Endothelial cell of umbilical vein (primary cell): ENCODE measurements at regions of chr14 and their contacts with region 1.

Region 1: DNA sequence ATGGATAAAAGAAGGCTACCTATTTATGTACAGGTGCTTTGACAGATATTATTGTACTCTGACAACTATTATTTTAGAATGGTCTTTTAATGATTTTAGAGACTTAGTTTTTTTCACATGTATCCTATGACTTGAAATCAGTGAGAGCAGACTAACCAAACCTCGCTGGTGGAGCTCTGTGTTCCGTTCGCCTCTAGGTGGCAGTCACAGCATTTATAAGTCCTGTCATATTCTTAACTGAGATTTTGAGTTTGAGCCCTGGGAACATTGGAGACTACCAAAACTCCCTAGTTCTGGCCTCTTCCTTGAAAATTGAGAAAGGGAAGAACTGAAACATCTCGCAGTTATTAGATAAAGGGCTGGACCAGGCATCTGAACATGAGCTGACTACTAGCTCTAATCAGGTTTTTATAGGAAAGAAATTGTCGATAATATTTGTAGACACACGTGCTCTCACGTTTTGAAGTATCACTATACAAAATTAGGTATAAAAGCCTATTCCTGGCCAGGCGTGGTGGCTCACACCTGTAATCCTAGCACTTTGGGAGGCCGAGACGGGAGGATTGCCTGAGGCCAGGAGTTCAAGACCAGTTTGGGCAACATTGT is 48.3 kb downstream of the TTLL5 start:
- DNase-seq: peak; percentile 79
- H3K4me3 ChIP-seq: no peak overlapping the region
- H3K27ac ChIP-seq: no peak overlapping the region
- H3K4me1 ChIP-seq: no peaks in the 10 kb centered on the region
- H3K27me3 ChIP-seq: no peaks in the 10 kb centered on the region
- CTCF ChIP-seq: peak; percentile 72 to 75
- POLR2A ChIP-seq: no peak

Region 2: DNA sequence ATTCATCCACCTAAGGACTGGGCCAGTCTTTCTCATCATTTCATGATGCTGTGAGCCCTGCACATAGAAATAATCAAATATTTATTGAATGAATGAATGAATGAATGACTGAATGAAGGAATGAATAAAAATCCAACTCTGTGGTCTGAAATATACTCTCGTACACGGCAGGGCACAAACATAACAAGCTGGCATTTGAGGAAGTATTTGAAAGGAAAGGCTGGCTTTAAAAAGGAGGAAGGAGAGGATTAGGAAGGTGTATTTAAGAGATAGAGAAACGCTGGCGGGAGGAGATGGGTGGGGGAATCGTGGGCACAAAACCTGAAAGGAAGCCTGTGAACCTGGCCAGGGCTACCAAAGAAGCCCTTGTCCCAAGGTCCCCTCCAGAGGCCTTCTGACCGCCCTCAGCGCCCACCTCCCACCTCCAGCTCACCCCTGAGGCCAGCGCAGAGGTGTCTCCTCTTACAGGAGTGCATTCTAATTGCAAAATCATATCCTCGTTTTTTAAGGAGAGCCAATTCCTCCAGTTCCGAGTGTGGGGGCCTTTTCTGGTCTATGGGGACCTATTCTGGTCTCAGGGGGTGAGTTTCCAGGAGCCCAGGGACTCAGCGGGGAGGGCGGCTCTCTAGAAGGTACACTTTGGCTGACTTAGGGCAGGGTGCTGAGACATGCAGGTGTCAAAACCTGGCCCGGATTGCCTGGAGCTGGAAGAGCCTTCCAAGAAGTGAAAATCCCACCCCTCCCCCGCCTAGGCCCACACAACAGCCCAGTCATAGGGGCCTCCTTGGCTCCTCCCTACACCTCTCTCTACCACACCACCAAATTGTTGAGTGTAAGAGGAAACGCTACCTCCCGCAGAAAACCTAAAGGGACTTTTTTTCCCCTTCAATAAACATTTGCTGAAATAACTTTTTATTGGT is 290.2 kb before region 1 on chr14:
- CTCF ChIA-PET with region 1: no interaction called
- POLR2A ChIA-PET with region 1: no interaction called
- dilution Hi-C with region 1: no loop called
- intact Hi-C with region 1: no loop called
- DNase-seq: no peak
- H3K4me3 ChIP-seq: no peak overlapping the region
- H3K27ac ChIP-seq: no peak overlapping the region
- H3K4me1 ChIP-seq: no peaks in the 10 kb centered on the region
- H3K27me3 ChIP-seq: peaks cover 6 to 8% of the 10 kb centered on the region in 2 experiments
- CTCF ChIP-seq: no peak
- POLR2A ChIP-seq: no peak

Region 3: DNA sequence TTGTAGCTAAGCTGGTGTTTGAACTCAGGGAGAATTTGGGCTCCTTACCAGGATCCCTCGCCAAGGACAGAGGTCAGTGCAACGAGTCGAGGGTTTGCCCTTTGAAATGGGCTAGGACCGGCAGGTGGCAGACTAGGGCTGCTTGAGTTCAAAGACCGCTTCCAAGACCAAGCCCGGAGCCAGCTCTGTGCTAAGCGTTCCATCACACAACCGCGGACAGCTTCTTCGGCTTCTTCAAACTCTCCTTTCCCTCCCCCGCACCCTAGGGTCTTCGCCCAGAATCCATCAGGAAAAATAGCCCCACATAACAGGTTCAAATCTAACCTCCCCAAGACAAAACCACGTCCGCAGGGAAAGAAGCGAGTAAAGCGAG is 131.6 kb before region 1 on chr14:
- CTCF ChIA-PET with region 1: interaction called, 32 read pairs
- POLR2A ChIA-PET with region 1: no interaction called
- dilution Hi-C with region 1: no loop called
- intact Hi-C with region 1: no loop called
- DNase-seq: peak; percentile 82
- H3K4me3 ChIP-seq: peak overlapping the region; percentile 50 to 83 (median 64)
- H3K27ac ChIP-seq: no peak overlapping the region
- H3K4me1 ChIP-seq: peaks cover 18% of the 10 kb centered on the region
- H3K27me3 ChIP-seq: peaks cover 0 to 4% of the 10 kb centered on the region in 2 experiments
- CTCF ChIP-seq: peak; percentile 70 to 83
- POLR2A ChIP-seq: no peak

Region 4: DNA sequence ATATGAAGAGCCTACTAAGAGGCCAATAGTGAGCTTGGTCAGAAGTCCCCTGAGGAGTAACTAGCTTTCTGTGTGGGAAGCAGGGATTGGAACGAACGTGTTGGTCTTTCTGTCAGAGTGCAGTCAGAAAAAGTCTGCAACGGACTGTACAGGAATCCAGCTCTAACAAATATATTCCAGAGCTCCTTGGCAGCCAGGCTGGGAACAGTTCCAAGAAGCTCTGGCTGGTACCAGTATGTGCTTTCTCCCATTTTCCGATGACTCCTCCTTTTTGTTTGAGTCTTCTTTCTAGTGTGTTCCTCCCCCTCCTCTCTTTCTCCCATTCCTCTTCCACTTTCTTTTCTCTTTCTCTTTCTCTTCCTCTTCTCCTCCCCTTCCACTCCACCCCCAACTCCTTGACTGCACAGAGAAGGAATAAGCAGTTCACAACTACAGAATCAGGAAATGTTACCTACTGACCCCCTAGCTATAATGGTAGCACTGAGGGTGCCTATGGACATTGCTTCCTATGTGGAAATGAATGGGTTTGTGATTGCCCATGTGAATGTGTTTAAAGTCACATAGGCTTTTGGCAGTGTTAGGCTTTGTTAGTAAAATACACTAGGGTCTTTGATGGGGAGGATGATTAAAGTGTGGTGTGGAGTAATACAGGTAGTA is 11.7 kb after region 1 on chr14:
- CTCF ChIA-PET with region 1: interaction called, 41 read pairs
- POLR2A ChIA-PET with region 1: no interaction called
- dilution Hi-C with region 1: no loop called
- intact Hi-C with region 1: no loop called
- DNase-seq: peak; percentile 59
- H3K4me3 ChIP-seq: no peak overlapping the region
- H3K27ac ChIP-seq: no peak overlapping the region
- H3K4me1 ChIP-seq: no peaks in the 10 kb centered on the region
- H3K27me3 ChIP-seq: no peaks in the 10 kb centered on the region
- CTCF ChIP-seq: no peak
- POLR2A ChIP-seq: no peak

Region 5: GRCh38 chr14:75794615-75795038 is 85.3 kb after region 1 on chr14:
- CTCF ChIA-PET with region 1: interaction called, 57 read pairs
- POLR2A ChIA-PET with region 1: no interaction called
- dilution Hi-C with region 1: no loop called
- intact Hi-C with region 1: loop called (anchors 5 kb)
- DNase-seq: peak; percentile 49
- H3K4me3 ChIP-seq: no peak overlapping the region
- H3K27ac ChIP-seq: no peak overlapping the region
- H3K4me1 ChIP-seq: no peaks in the 10 kb centered on the region
- H3K27me3 ChIP-seq: no peaks in the 10 kb centered on the region
- CTCF ChIP-seq: peak in 1 of 2 donors; percentile 31
- POLR2A ChIP-seq: no peak

Region 6: DNA sequence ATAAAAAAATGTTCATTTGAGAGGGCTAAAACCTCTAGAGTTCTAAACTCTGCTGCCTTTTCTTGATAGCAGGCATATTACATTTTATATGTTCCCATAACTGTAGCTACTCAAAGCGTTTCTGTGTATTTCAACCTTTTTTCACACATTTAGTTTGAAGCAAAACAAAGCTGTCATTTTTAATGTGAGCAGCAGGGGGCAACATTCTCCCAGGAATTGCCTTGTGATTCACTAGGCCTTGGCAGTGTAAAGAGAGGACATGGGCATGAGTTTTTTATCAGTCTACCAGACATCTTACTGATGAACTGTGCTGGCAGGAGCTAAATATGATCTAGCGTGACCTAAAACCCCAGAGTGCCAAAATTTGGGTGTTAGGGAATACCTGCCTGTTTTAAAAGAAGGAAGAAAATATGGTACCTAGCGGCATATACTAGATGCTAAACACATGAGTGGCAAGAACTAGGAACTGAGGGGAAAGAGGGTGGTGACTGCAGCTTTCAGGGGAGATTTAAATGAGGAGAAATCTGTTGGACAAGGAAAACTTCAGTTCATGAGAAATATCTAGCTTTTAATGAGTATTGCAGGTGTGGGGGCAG is 341.6 kb after region 1 on chr14:
- CTCF ChIA-PET with region 1: interaction called, 32 read pairs
- POLR2A ChIA-PET with region 1: interaction called, 5 read pairs
- dilution Hi-C with region 1: no loop called
- intact Hi-C with region 1: loop called (anchors 5 kb)
- DNase-seq: peak; percentile 72
- H3K4me3 ChIP-seq: no peak overlapping the region
- H3K27ac ChIP-seq: no peak overlapping the region
- H3K4me1 ChIP-seq: no peaks in the 10 kb centered on the region
- H3K27me3 ChIP-seq: no peaks in the 10 kb centered on the region
- CTCF ChIP-seq: peak; percentile 51 to 69
- POLR2A ChIP-seq: no peak

Region 7: GRCh38 chr14:76386915-76387782 is 677.8 kb after region 1 on chr14:
- CTCF ChIA-PET with region 1: interaction called, 44 read pairs
- POLR2A ChIA-PET with region 1: no interaction called
- dilution Hi-C with region 1: no loop called
- intact Hi-C with region 1: loop called (anchors 1 kb)
- DNase-seq: peak; percentile 63
- H3K4me3 ChIP-seq: no peak overlapping the region
- H3K27ac ChIP-seq: no peak overlapping the region
- H3K4me1 ChIP-seq: no peaks in the 10 kb centered on the region
- H3K27me3 ChIP-seq: peaks cover 21 to 39% of the 10 kb centered on the region in 2 experiments
- CTCF ChIP-seq: peak; percentile 98
- POLR2A ChIP-seq: no peak